MCF 10A (cell line): ENCODE measurements at regions of chr11 and their contacts with region 1.

Region 1: DNA sequence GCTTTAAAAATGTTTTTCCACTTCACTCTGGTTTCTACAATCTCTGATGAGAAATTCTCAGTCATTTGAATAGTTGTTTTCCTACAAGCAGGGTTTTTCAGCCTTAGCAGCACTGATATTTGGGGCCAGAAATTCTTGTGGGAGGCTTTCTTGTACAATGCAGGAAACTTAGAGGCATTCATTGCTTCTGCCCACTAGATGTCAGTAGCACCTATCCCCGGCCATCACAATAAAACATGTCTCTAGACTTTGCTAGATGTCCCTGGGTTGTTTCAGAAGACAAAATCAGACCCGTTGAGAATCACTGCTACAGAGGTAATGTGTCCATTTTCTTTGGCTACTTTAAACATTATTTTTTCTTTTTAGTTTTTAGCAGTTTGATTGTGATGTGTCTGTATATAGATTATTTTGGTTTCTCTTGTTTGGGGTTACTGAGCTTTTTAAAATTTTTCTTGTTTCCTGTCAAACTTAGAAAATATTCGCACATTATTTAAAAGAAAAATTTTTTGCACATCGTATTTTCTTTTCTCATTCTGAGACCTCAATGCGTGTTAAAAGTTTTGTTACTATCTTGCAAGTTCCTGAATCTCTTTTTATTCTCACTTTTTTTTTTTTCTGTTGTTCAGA is 60.8 kb upstream of the CCDC179 start:
- DNase-seq: peak; percentile 51
- H3K4me3 Mint-ChIP-seq: no peak overlapping the region
- H3K27ac Mint-ChIP-seq: no peak overlapping the region
- H3K4me1 Mint-ChIP-seq: peaks cover 8% of the 10 kb centered on the region
- H3K27me3 Mint-ChIP-seq: peaks cover 38% of the 10 kb centered on the region
- CTCF ChIP-seq: peak; percentile 31

Region 2: DNA sequence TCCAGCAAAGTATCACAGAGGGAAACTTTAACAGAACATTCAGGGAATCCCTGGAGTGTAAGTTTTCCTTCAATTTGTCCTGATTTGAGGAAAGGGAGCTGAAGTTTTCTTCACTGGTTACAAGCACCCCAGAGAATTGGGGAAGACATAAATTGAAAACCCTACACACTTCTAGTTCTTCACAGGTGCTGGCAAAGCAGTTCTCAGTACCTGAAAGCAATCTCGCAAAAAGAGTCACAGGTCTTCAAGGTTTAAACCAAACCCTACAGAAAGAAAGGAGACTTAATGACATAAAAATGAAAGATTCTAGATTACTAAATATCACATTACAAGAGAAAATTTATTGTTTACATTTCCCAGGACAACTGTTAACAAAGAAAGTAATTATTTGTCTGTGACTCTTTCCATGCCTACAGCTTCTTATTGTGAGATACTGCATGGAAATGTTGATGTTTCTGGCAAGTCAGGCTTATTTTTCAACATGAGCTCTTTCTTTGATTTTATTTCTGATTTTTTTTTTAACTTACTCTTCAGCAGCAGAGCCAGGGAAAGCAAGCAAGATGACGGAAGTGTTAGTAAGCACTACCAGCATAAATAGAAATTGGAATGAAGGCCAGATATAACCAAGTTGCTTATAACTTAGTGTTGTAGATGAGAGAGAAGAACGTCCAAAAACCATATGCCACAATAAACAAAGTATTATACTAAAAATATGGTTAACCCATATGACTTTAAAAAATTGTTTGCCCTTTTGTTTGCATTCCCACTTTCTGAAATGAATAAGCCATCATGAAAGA is 339.5 kb before region 1 on chr11:
- CTCF ChIA-PET with region 1: no interaction called
- POLR2A ChIA-PET with region 1: no interaction called
- intact Hi-C with region 1: no loop called
- DNase-seq: no peak
- H3K4me3 Mint-ChIP-seq: no peak overlapping the region
- H3K27ac Mint-ChIP-seq: no peak overlapping the region
- H3K4me1 Mint-ChIP-seq: no peaks in the 10 kb centered on the region
- H3K27me3 Mint-ChIP-seq: peaks cover 60% of the 10 kb centered on the region
- CTCF ChIP-seq: no peak

Region 3: GRCh38 chr11:22875869-22876473 is 45.1 kb before region 1 on chr11:
- CTCF ChIA-PET with region 1: interaction called, 4 read pairs
- POLR2A ChIA-PET with region 1: no interaction called
- intact Hi-C with region 1: loop called (anchors 5 kb)
- DNase-seq: peak; percentile 90
- H3K4me3 Mint-ChIP-seq: no peak overlapping the region
- H3K27ac Mint-ChIP-seq: no peak overlapping the region
- H3K4me1 Mint-ChIP-seq: no peaks in the 10 kb centered on the region
- H3K27me3 Mint-ChIP-seq: peaks cover 45% of the 10 kb centered on the region
- CTCF ChIP-seq: peak; percentile 65

Region 4: GRCh38 chr11:22901603-22902002 is 19.4 kb before region 1 on chr11:
- CTCF ChIA-PET with region 1: interaction called, 14 read pairs
- POLR2A ChIA-PET with region 1: interaction called, 3 read pairs
- intact Hi-C with region 1: no loop called
- DNase-seq: no peak
- H3K4me3 Mint-ChIP-seq: no peak overlapping the region
- H3K27ac Mint-ChIP-seq: no peak overlapping the region
- H3K4me1 Mint-ChIP-seq: no peaks in the 10 kb centered on the region
- H3K27me3 Mint-ChIP-seq: no peaks in the 10 kb centered on the region
- CTCF ChIP-seq: no peak

Region 5: DNA sequence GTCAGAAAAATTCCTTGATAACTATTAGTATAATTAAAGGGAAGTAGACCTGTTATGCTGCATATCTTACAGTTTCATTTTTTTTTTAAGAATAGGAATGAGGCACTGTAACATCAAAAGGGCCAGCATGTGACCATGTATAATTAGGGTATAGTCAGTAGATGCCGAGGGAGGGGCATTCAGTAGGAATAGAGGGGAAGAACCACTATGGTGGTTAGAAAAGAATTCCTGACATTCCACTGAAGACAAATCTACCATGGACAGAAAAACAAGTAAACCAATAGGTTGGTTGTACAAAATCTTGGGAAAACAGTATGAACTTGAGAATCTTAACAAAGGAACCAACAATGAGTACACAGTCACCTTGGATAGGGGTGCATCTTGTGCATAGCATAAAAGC is 17.7 kb after region 1 on chr11:
- CTCF ChIA-PET with region 1: no interaction called
- POLR2A ChIA-PET with region 1: no interaction called
- intact Hi-C with region 1: no loop called
- DNase-seq: no peak
- H3K4me3 Mint-ChIP-seq: no peak overlapping the region
- H3K27ac Mint-ChIP-seq: no peak overlapping the region
- H3K4me1 Mint-ChIP-seq: no peaks in the 10 kb centered on the region
- H3K27me3 Mint-ChIP-seq: no peaks in the 10 kb centered on the region
- CTCF ChIP-seq: no peak

Region 6: DNA sequence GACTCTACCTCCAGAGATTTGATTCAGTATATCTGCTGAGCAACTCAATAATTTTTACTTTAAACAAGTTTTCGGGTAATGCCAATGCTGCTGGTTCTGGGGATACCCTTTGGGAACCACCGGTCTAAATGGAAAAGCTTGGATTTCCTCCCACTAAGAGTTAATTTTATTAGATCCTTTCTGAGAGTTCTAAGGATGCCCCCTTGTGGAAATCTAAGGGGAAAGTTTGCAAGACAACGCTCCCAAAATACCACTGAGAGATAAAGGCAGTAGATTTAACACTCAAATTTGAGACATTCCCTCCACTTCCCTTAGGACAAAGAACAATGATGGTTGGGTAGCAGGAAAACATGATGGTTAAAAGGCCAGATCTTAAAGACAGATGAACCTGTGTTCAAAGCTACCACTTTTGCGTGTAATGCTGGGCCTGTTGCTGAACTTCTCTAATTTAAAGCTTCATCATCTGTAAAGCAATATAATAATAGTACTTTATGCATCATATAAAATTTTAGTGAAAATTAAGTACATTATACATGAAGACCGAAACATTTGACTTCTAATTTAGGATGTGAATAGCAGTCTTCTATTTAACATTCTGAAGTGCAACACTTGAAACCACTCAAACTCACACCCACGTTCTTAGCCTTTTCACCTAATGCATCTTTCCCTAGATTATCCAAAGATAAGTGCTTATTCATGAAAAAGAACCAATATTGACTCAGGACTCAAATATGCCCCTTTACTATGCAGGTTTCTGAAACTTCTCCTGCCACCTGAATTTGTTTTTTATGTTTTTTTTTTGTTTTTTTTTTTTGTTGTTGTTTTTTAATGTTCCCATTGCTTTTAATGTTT is 1465.7 kb after region 1 on chr11:
- CTCF ChIA-PET with region 1: no interaction called
- POLR2A ChIA-PET with region 1: no interaction called
- intact Hi-C with region 1: loop called (anchors 5 kb)
- DNase-seq: peak; percentile 32
- H3K4me3 Mint-ChIP-seq: no peak overlapping the region
- H3K27ac Mint-ChIP-seq: no peak overlapping the region
- H3K4me1 Mint-ChIP-seq: no peaks in the 10 kb centered on the region
- H3K27me3 Mint-ChIP-seq: peaks cover 9% of the 10 kb centered on the region
- CTCF ChIP-seq: peak; percentile 40